Activated T-helper 2 cell treated with anti-CD3 and anti-CD28 coated beads, Interferon-gamma antibody, Interleukin-2, Interleukin-4, amounts not matched to agents 10 μg/mL and 5 μg/mL and 100 μg/mL, durations not matched to agents 14 hours and 24 hours and 36 hours (primary cell): ENCODE measurements at regions of chr17 and their contacts with region 1.

Region 1: GRCh38 chr17:50161023-50161910 is 4.5 kb upstream of the SGCA start:
- DNase-seq: peak; percentile 95
- H3K4me3 Mint-ChIP-seq: peak overlapping the region; percentile 76
- H3K27ac Mint-ChIP-seq: peak overlapping the region; percentile 99
- H3K4me1 Mint-ChIP-seq: peaks cover 35% of the 10 kb centered on the region
- H3K27me3 Mint-ChIP-seq: no peaks in the 10 kb centered on the region

Region 2: GRCh38 chr17:50094753-50095619 is 66.3 kb before region 1 on chr17 and contains the start of gene PDK2:
- intact Hi-C with region 1: loop called (anchors 2 kb)
- DNase-seq: peak; percentile 95
- H3K4me3 Mint-ChIP-seq: peak within 1 kb of the TSS; percentile 86
- H3K27ac Mint-ChIP-seq: peak within 1 kb of the TSS; percentile 79
- H3K4me1 Mint-ChIP-seq: peaks cover 13% of the 10 kb centered on the region
- H3K27me3 Mint-ChIP-seq: no peaks in the 10 kb centered on the region
- total RNA-seq, gene PDK2: 11.0 and 12.1 TPM in 2 replicates

Region 3: DNA sequence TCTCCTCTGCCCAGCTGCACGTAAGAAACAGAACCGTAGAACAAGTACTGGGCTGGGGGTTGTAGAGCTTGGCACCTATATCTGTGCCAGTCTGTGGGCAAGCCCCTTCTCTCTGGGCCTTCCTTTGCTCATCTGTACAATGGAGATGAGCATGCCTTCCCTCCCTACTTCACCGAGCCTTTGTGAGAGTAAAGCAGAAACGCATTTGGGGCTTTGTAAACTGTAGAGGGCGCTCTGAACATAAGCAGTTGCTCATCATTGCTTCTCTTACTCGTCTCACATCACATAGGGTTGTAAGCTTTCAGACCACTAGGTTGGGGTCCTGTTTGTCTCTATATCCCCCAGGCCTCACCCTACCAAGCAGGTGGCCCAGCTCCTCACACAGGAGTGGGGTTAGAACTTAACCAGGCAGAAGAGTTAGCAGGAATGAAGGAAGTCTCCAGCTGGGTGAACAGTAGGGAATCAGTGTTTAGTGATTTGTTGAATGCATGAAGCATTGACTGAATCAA is 46.4 kb before region 1 on chr17:
- intact Hi-C with region 1: loop called (anchors 2 kb)
- DNase-seq: peak; percentile 48
- H3K4me3 Mint-ChIP-seq: no peak overlapping the region
- H3K27ac Mint-ChIP-seq: no peak overlapping the region
- H3K4me1 Mint-ChIP-seq: peaks cover 8% of the 10 kb centered on the region
- H3K27me3 Mint-ChIP-seq: peaks cover 30% of the 10 kb centered on the region

Region 4: GRCh38 chr17:50139950-50140871 is 21.1 kb before region 1 on chr17:
- intact Hi-C with region 1: loop called (anchors 2 kb)
- DNase-seq: peak; percentile 77
- H3K4me3 Mint-ChIP-seq: peak overlapping the region; percentile 67
- H3K27ac Mint-ChIP-seq: peak overlapping the region; percentile 77
- H3K4me1 Mint-ChIP-seq: peaks cover 63% of the 10 kb centered on the region
- H3K27me3 Mint-ChIP-seq: no peaks in the 10 kb centered on the region